ENCODE measurements at regions of chr9 and their contacts with region 1.

Region 1: DNA sequence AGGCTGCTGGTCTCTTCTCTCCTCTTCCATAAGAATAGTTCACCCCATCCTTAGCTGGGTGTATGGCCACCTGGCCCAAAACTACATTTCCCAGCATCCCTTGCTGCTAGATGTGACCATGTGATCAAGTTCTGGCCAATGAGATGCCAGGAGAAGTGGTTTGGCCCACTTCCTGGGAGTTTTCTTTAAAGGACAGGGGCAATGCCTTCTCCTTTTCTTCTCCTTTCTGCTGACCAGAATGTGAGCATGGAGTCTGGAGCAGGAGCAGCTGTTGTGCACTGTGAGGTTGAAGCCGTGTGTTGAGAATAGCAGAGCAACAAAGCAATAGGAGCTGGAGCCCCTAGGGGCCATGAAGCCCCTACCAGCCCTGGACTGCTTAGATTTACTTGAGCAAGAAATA is 36.8 kb downstream of the C9orf50 start:
- DNase-seq: peak; percentile 86
- ATAC-seq: peak; percentile 59
- H3K4me3 Mint-ChIP-seq: no peak overlapping the region
- H3K27ac Mint-ChIP-seq: peak overlapping the region; percentile 85
- H3K4me1 Mint-ChIP-seq: peaks cover 67% of the 10 kb centered on the region
- H3K27me3 Mint-ChIP-seq: peaks cover 5% of the 10 kb centered on the region

Region 2: DNA sequence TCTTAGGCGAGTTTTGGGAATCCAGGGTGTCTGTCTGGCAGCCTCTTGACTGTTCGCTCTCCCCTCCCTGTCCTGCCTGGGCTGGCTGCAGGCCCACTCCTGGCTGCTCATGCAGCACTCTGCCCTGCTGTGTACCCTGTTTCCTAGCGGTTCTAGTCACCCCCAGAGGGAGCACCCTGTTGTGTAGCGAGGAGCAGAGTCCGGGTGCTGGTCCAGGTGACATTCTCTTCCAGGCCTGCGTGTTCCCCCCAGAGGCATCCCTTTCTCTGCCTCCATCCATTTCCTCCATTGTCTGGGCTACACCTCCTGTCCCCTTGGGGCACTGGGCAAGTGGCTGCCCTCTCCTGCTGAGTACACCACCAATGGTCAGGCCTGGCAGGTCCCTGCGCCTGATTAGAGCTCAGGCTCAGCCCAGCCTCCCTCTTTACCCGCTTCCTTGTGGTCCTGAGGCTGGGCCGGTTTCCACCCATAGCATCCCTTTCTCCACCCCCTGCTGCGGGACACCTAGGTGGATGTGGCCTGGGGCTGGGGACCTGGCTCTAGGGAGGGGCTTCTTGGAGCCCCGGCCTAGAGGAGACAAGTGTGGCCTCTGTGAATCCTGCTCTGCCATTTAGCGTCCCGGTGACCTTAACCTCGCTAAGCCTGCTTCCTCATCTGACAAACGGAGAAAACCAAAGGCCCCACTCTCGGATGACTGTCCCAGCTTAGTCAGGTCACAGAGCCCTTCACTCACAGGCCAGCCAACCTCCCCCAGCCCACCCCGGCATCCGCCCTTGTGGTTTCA is 490.5 kb before region 1 on chr9:
- CTCF ChIA-PET with region 1: no interaction called
- DNase-seq: no peak
- ATAC-seq: no peak
- H3K4me3 Mint-ChIP-seq: no peak overlapping the region
- H3K27ac Mint-ChIP-seq: no peak overlapping the region
- H3K4me1 Mint-ChIP-seq: no peaks in the 10 kb centered on the region
- H3K27me3 Mint-ChIP-seq: no peaks in the 10 kb centered on the region

Region 3: DNA sequence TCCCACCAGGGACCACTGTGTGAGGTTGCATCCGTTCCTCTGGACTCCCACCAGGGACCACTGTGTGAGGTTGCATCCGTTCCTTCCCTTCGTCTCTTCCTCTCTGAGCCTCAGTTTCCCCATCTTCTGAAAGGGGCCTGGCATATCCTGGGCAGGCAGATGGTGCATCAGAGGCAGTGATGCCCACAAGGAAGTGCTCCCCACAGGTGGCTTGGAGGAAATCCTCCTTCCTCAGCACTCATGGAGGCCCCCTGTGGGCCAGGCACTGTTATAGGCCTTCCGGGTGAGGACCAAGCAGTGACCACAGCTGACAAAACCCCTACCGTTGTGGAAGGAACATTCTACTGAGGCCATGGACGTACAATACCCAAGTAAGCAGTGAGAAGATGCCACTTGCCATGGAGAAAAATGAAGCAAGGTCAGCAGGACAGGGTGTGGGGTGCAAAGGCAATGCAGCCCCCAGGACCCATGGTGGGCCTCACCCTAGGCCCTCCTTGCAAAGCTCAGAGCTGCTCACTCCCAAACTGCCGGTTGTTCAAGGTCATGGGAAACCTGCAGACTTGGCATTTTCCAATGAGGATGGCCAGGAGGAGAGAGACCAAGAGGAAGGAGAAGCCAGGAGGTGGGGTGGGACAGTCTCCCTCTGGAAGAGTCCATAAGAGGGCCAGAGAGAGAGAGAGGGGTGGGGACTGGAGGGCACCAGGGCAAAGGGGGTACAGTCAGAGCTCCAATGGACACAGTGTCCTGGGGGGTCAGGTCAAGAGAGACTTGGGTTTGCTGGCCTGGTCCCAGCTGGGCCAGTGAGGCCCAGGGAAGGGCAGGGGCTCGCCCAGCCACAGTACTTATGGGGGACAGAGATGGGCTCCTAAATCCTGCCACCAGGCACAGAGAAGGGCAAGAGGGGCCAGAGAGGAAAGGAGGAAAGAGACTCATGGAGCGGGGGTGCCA is 14.4 kb before region 1 on chr9:
- CTCF ChIA-PET with region 1: interaction called, 17 read pairs
- DNase-seq: no peak
- ATAC-seq: no peak
- H3K4me3 Mint-ChIP-seq: peak overlapping the region; percentile 56
- H3K27ac Mint-ChIP-seq: no peak overlapping the region
- H3K4me1 Mint-ChIP-seq: peaks cover 24% of the 10 kb centered on the region
- H3K27me3 Mint-ChIP-seq: peaks cover 33% of the 10 kb centered on the region

Region 4: GRCh38 chr9:129597355-129598088 is 13.4 kb after region 1 on chr9:
- CTCF ChIA-PET with region 1: interaction called, 23 read pairs
- DNase-seq: peak; percentile 76
- ATAC-seq: peak; percentile 77
- H3K4me3 Mint-ChIP-seq: peak overlapping the region; percentile 47
- H3K27ac Mint-ChIP-seq: peak overlapping the region; percentile 73
- H3K4me1 Mint-ChIP-seq: peaks cover 31% of the 10 kb centered on the region
- H3K27me3 Mint-ChIP-seq: peaks cover 15% of the 10 kb centered on the region

Region 5: GRCh38 chr9:129640086-129640870 is 56.1 kb after region 1 on chr9:
- CTCF ChIA-PET with region 1: no interaction called
- DNase-seq: no peak
- ATAC-seq: no peak
- H3K4me3 Mint-ChIP-seq: peak overlapping the region; percentile 83
- H3K27ac Mint-ChIP-seq: peak overlapping the region; percentile 3
- H3K4me1 Mint-ChIP-seq: peaks cover 21% of the 10 kb centered on the region
- H3K27me3 Mint-ChIP-seq: no peaks in the 10 kb centered on the region

Measured in activated CD8-positive, alpha-beta memory T cell treated with anti-CD3 and anti-CD28 coated beads, Interleukin-2, amount 10 ng/mL, durations not matched to agents 7 days and 5 days (primary cell).